ENCODE measurements at regions of chr1 and their contacts with region 1.

Region 1: DNA sequence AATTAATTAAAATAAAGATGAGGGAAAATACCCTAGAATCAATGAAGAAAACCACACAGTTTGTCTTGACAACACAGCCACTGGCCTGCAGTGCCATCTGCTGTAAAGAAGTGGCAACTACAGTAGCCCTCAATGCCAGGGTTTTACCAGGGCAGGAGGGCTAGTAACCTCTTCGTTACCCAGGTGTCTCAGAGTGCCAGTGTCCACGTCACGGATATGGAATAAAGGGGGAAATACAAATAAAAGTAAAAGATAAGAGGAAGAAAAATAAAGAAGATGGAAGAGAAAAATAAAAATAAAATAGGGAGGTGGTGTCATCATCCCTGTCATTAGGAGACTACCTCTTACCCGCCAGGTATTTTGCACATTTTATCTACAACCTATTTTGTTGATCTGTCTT is 14.2 kb upstream of the SLC44A3 start:
- DNase-seq: peak in 30 of 35 experiments; percentile 7 to 62 (median 28)
- ATAC-seq: peak; percentile 31 to 60 (median 56)
- H3K4me3 ChIP-seq: no peak overlapping the region
- H3K4me3 Mint-ChIP-seq: no peak overlapping the region
- H3K27ac ChIP-seq: no peak overlapping the region
- H3K27ac Mint-ChIP-seq: peak overlapping the region in 1 of 2 donors; percentile 68
- H3K4me1 ChIP-seq: peaks cover 5 to 13% of the 10 kb centered on the region in 2 experiments
- H3K4me1 Mint-ChIP-seq: peaks cover 7 to 25% (median 14%) of the 10 kb centered on the region in 3 donors
- H3K27me3 ChIP-seq: peaks cover 0 to 11% of the 10 kb centered on the region in 2 experiments
- H3K27me3 Mint-ChIP-seq: peaks cover 3 to 9% of the 10 kb centered on the region in 2 donors

Region 2: GRCh38 chr1:94025383-94026340 is 780.2 kb before region 1 on chr1:
- CTCF ChIA-PET with region 1: interaction called, 3 to 10 read pairs
- POLR2A ChIA-PET with region 1: no interaction called
- DNase-seq: peak in 1 of 35 experiments; percentile 37
- ATAC-seq: no peak
- H3K4me3 ChIP-seq: no peak overlapping the region
- H3K4me3 Mint-ChIP-seq: no peak overlapping the region
- H3K27ac ChIP-seq: no peak overlapping the region
- H3K27ac Mint-ChIP-seq: no peak overlapping the region
- H3K4me1 ChIP-seq: peaks cover 0 to 16% of the 10 kb centered on the region in 2 experiments
- H3K4me1 Mint-ChIP-seq: peaks cover 0 to 7% (median 0%) of the 10 kb centered on the region in 3 donors
- H3K27me3 ChIP-seq: peaks cover 0 to 9% of the 10 kb centered on the region in 2 experiments
- H3K27me3 Mint-ChIP-seq: peaks cover 0 to 13% of the 10 kb centered on the region in 2 donors

Region 3: GRCh38 chr1:94481473-94481933 is 324.4 kb before region 1 on chr1:
- CTCF ChIA-PET with region 1: interaction called, 13 to 28 read pairs
- POLR2A ChIA-PET with region 1: no interaction called
- DNase-seq: peak in 26 of 35 experiments; percentile 0 to 69 (median 13)
- ATAC-seq: peak; percentile 57 to 77 (median 61)
- H3K4me3 ChIP-seq: no peak overlapping the region
- H3K4me3 Mint-ChIP-seq: no peak overlapping the region
- H3K27ac ChIP-seq: no peak overlapping the region
- H3K27ac Mint-ChIP-seq: no peak overlapping the region
- H3K4me1 ChIP-seq: no peaks in the 10 kb centered on the region
- H3K4me1 Mint-ChIP-seq: no peaks in the 10 kb centered on the region
- H3K27me3 ChIP-seq: no peaks in the 10 kb centered on the region
- H3K27me3 Mint-ChIP-seq: no peaks in the 10 kb centered on the region

Region 4: DNA sequence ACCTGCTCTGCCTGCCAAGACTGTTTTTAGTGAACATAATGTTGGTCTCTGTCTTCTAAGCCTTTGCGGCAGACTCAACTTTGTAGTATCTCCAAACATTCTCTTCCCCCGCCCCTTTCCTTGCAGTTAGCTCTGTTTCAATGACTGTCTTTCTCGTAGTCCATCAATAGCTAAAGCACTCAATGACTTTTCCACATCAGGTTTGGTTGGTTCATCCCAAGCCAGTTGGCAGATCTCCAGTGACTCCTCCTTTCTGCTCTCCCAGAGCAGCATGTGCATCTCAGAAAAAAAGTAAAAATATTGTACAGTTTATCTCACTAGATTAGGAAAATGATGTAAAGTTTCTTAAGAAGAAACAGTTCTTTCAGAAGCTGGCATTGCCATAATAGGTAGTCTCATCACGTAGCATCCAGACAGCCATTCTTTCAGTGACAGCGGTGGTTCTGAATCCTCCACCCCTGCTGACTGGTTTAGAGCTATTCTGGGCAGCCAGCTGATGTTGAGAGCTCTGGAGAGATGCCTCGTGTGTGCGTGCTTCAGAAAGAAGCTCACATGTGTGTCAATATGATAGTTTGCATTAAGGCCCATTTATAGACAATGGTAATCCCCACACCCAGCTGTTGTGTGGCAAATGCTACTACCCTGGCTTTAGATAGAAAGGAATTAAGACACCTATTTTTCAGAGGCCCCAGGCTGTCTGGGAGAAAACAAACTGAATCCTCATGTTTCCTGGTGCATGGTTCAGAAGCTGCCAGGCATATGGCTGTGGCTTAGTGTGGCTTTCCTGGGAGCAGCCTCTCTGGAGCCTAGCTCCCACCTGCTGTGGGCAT is 67.8 kb after region 1 on chr1:
- CTCF ChIA-PET with region 1: no interaction called
- POLR2A ChIA-PET with region 1: no interaction called
- DNase-seq: no peak
- ATAC-seq: no peak
- H3K4me3 ChIP-seq: no peak overlapping the region
- H3K4me3 Mint-ChIP-seq: no peak overlapping the region
- H3K27ac ChIP-seq: no peak overlapping the region
- H3K27ac Mint-ChIP-seq: no peak overlapping the region
- H3K4me1 ChIP-seq: no peaks in the 10 kb centered on the region
- H3K4me1 Mint-ChIP-seq: peaks cover 0 to 8% (median 7%) of the 10 kb centered on the region in 3 donors
- H3K27me3 ChIP-seq: peaks cover 0 to 3% of the 10 kb centered on the region in 2 experiments
- H3K27me3 Mint-ChIP-seq: peaks cover 0 to 14% of the 10 kb centered on the region in 2 donors